ENCODE measurements at regions of chr5 and their contacts with region 1.

Region 1: DNA sequence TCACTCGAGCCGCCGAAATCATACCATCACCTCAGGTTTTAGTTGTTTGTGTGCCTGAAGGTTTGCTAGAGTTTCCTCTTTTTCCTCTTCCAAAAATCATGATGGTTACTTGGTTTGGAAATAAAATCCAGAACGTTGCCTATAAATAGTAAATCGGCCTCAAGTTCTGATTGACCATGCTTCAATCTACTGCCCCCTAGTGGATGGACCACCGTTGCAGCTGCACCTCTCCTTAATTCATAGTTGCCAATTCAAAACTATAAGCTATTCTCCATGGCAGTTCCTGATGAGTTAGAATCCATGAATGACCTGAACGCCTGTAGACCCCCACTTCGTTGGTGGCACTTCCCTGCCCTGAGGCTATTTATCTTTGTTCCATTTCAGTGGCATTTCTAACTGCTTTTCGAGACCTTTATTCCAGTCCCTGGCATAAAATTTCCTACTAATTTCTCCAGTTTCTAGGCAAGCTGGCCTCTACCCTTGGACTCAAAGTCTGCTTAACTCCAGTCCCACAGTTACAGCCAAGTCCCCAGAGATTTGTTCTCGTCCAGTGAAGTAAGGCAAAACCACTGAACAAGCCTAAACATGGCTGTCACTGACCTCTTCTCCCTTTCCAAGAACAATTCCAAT is 422.6 kb downstream of the EFNA5 start:
- DNase-seq: peak; percentile 79
- ATAC-seq: peak; percentile 65
- H3K4me3 Mint-ChIP-seq: no peak overlapping the region
- H3K27ac Mint-ChIP-seq: no peak overlapping the region
- H3K4me1 Mint-ChIP-seq: peaks cover 6% of the 10 kb centered on the region
- H3K27me3 Mint-ChIP-seq: no peaks in the 10 kb centered on the region
- CTCF ChIP-seq: peak; percentile 80

Region 2: DNA sequence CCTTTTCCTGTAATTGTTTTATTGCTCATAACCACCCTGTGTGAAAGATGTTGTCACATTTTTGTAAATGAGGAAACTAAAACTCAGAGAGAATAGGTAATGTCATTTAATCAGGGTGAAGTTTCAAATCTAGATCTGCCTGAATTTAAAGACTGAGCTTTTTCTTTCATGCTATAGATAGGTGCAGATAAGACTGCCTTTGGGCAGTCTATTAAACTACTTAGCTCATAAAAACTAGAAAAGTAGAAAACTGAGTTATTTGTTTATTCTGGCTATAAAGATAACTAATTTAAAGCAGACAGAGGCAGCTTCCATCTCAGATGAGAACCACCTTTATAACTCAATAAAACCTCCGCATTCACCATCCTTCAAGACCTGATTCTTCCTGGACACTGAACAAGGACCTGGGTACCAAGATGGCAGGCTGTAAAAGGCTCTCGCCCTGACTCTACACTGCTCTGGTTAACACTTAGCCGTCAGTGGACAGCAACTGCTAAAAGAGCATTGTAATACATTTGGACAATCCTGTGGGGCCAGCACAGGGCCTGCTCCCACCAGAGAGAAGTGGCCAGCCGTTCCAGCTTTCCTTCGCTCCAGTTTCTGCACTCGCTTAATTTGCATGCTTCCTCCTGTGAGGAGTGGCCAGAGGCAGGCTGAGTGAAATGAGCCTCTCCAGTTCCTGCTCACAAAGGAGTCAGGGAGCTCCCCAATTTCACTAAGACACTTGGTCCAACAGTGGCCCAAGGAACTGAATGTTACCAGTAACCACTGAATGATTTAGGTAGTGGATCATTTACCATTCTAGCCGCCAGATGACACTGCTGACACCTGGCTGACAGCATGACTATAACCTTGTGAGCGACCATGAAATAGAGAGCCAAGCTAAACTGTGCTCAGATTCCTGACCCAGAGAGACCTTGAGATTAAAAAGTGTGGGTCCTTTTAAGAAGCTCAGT is 143.9 kb before region 1 on chr5:
- CTCF ChIA-PET with region 1: interaction called, 13 read pairs
- POLR2A ChIA-PET with region 1: no interaction called
- DNase-seq: peak; percentile 16
- ATAC-seq: peak; percentile 96
- H3K4me3 Mint-ChIP-seq: no peak overlapping the region
- H3K27ac Mint-ChIP-seq: 0 out of 2 replicates have a peak overlapping the region, but pooled peaks have one; percentile 14
- H3K4me1 Mint-ChIP-seq: peaks cover 12% of the 10 kb centered on the region
- H3K27me3 Mint-ChIP-seq: no peaks in the 10 kb centered on the region
- CTCF ChIP-seq: no peak

Region 3: DNA sequence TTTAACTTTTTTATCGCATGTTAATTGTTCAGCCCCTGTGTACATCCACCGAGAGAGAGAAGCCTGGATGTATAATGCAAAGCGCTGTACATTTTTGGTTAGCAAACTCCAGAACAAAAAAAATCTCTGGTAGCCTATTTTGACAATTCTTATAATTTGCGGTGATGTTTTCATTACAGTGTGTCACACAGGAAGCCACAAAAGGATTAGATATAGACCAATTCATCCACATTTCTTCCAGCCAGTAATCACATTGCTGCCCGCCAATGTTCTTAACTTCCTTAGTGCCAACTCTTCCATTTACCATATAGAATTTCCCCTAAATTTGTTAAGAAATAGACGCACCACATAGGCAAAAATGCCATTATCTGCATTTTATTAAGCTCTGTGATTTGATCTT is 13.0 kb before region 1 on chr5:
- CTCF ChIA-PET with region 1: interaction called, 12 read pairs
- POLR2A ChIA-PET with region 1: no interaction called
- DNase-seq: no peak
- ATAC-seq: no peak
- H3K4me3 Mint-ChIP-seq: no peak overlapping the region
- H3K27ac Mint-ChIP-seq: no peak overlapping the region
- H3K4me1 Mint-ChIP-seq: peaks cover 18% of the 10 kb centered on the region
- H3K27me3 Mint-ChIP-seq: no peaks in the 10 kb centered on the region
- CTCF ChIP-seq: no peak

Region 4: GRCh38 chr5:107263387-107264018 is 15.3 kb after region 1 on chr5:
- CTCF ChIA-PET with region 1: interaction called, 11 read pairs
- POLR2A ChIA-PET with region 1: no interaction called
- DNase-seq: no peak
- ATAC-seq: no peak
- H3K4me3 Mint-ChIP-seq: no peak overlapping the region
- H3K27ac Mint-ChIP-seq: no peak overlapping the region
- H3K4me1 Mint-ChIP-seq: no peaks in the 10 kb centered on the region
- H3K27me3 Mint-ChIP-seq: no peaks in the 10 kb centered on the region
- CTCF ChIP-seq: no peak

Region 5: GRCh38 chr5:107501965-107502675 is 253.9 kb after region 1 on chr5:
- CTCF ChIA-PET with region 1: no interaction called
- POLR2A ChIA-PET with region 1: interaction called, 10 read pairs
- DNase-seq: no peak
- ATAC-seq: no peak
- H3K4me3 Mint-ChIP-seq: no peak overlapping the region
- H3K27ac Mint-ChIP-seq: peak overlapping the region; percentile 73
- H3K4me1 Mint-ChIP-seq: peaks cover 70% of the 10 kb centered on the region
- H3K27me3 Mint-ChIP-seq: no peaks in the 10 kb centered on the region
- CTCF ChIP-seq: no peak

Measured in WTC11 (cell line).